Colonic mucosa (tissue), 4 donors: ENCODE measurements at regions of chr18 and their contacts with region 1.

Region 1: DNA sequence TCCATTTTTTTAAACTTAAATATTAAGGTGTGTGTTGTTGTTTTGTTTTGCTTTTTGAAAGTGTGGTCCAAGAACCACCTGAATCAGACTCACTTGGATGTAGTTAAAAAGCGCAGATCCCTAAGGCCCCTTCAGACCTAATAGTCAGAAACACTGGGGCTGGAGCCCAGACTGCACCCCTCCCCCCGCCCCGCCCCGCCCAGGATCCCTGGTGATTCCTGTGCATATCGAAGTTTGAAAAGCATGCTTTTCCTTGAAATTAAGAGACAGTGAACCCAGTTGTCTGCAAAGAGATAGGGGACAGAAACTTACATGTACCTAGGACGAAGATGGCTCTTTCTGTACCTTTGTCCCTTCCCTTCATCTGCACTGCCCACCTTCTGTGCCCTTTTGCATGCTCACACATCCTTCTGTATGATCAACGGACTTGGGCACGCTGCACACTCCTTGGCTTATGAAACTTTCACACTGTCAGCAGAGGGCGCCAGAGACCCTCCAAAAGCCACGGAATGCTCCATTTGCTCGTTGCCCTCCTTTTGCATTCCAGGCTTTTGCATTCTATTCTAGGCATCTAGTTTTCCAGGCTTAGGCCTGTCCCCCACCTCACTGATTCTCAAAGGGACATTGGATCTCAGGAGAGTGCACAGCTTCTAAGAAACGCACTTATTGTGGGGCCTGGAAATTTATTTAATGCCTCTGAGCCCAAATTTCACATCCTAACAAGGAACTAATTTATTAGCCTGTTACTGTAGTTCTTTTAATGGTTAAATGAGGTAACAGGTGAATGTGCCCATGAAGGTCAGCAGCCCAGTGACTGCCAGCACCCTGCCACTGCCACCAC is 32.8 kb upstream of the SLC14A1 start:
- DNase-seq: peak; percentile 75
- H3K4me3 ChIP-seq: no peak overlapping the region
- H3K27ac ChIP-seq: no peak overlapping the region
- H3K4me1 ChIP-seq: no peaks in the 10 kb centered on the region
- H3K27me3 ChIP-seq: no peaks in the 10 kb centered on the region
- CTCF ChIP-seq: peak; percentile 70

Region 2: GRCh38 chr18:45423659-45424058 is 267.5 kb before region 1 on chr18:
- intact Hi-C with region 1: no loop called
- DNase-seq: no peak
- H3K4me3 ChIP-seq: no peak overlapping the region
- H3K27ac ChIP-seq: no peak overlapping the region
- H3K4me1 ChIP-seq: no peaks in the 10 kb centered on the region
- H3K27me3 ChIP-seq: no peaks in the 10 kb centered on the region
- CTCF ChIP-seq: no peak

Region 3: DNA sequence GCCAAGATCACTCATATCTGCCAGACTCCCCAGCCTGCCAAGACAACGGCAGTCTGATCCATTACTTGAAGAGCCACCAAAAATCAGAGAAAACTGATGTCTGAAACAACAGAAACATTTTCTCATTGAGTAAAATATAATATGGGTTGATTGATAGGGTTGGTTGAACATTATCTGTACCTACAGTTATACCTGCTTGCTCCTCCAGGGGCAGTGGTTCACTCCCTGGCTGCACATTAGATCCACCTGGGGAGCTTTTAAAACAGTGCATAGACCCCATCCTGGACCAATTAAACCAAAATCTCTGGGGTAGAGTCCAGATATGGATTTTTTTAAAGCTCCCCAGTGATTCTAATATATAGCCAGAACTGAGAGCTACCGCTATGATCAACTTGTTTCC is 119.5 kb before region 1 on chr18:
- intact Hi-C with region 1: no loop called
- DNase-seq: no peak
- H3K4me3 ChIP-seq: no peak overlapping the region
- H3K27ac ChIP-seq: no peak overlapping the region
- H3K4me1 ChIP-seq: no peaks in the 10 kb centered on the region
- H3K27me3 ChIP-seq: no peaks in the 10 kb centered on the region
- CTCF ChIP-seq: no peak

Region 4: GRCh38 chr18:45879681-45880655 is 188.8 kb after region 1 on chr18:
- intact Hi-C with region 1: loop called (anchors 5 kb)
- DNase-seq: peak; percentile 51
- H3K4me3 ChIP-seq: no peak overlapping the region
- H3K27ac ChIP-seq: no peak overlapping the region
- H3K4me1 ChIP-seq: no peaks in the 10 kb centered on the region
- H3K27me3 ChIP-seq: no peaks in the 10 kb centered on the region
- CTCF ChIP-seq: peak; percentile 99

Region 5: DNA sequence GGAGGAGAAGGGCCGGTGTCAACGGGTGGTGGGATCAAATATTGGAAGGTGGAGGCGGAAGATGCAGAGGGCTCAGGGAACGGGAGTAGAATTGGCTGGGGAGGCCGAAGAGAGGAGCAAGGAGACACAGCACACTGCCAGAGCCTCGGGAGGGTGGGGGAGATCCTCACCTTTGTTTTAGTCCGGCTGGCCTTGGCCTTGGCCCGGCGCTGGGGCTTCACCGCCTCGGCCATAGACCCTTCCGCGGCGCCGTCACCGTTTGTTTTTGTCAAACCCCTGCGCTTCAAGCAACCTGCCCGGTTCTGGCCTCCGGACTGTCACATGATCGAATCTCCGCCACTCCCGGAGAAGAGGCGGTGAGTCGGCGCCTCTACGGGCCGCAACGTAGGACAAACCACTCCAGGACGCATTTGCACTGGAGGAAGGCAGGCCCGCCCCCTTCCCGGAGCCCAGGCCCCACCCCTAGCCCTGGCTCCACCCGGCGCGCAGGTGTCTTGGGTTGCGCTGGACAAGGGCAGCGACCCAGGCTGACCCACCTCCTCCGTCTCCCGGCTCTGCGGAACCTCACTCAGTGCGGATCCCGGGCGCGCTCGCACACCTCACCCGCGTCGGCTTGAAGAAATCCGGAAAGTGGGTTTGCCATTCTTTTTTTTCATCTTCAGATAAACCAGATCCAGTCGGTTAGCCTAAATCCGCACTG is 276.0 kb after region 1 on chr18 and contains the start of gene EPG5:
- intact Hi-C with region 1: loop called (anchors 5 kb)
- DNase-seq: peak; percentile 98
- H3K4me3 ChIP-seq: peak within 1 kb of the TSS; percentile 71
- H3K27ac ChIP-seq: peak within 1 kb of the TSS; percentile 43
- H3K4me1 ChIP-seq: no peaks in the 10 kb centered on the region
- H3K27me3 ChIP-seq: no peaks in the 10 kb centered on the region
- CTCF ChIP-seq: no peak
- total RNA-seq, gene EPG5: 16.0 to 17.3 TPM

Region 6: DNA sequence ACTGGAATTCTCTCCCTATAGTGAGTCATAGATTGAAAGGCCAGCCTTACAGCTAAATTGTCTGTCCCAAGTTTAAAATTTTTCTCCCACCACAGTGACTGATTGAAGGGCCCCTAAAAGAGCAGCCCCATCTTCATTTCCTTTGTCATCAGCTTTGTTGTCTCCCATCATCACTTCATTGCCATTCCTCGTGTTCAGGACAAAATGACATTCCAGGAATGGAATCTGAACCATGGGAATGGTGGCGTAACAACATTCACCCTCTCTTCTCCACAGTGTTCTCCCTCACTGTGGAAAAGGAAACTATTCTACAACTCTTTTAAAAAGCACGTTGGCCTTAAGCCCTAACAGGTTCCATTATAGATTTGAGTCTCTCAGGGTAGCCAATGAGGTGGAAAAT is 328.7 kb after region 1 on chr18:
- intact Hi-C with region 1: no loop called
- DNase-seq: no peak
- H3K4me3 ChIP-seq: no peak overlapping the region
- H3K27ac ChIP-seq: no peak overlapping the region
- H3K4me1 ChIP-seq: no peaks in the 10 kb centered on the region
- H3K27me3 ChIP-seq: no peaks in the 10 kb centered on the region
- CTCF ChIP-seq: no peak

Region 7: GRCh38 chr18:46067431-46068007 is 376.3 kb after region 1 on chr18:
- intact Hi-C with region 1: loop called (anchors 10 kb)
- DNase-seq: no peak
- H3K4me3 ChIP-seq: no peak overlapping the region
- H3K27ac ChIP-seq: no peak overlapping the region
- H3K4me1 ChIP-seq: peaks cover 4% of the 10 kb centered on the region
- H3K27me3 ChIP-seq: no peaks in the 10 kb centered on the region
- CTCF ChIP-seq: no peak

Region 8: DNA sequence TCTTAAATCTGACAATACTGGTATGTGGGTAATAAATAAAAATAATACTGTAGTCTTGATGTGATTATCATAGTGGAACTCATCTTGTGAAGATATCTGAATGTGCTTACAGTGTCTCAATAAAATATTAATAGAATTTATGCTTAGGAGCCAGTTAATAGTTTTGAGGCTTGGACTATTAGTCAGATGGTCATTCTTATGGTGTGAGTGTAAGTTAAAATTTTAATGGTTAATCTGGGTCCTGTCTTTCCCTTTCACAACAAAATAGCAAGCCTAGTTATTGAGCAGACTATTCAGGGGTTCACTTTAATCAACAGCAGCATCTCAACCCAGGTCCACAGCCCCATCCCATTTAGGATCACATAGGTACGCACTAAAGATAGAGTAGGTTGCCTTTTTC is 551.9 kb after region 1 on chr18:
- intact Hi-C with region 1: loop called (anchors 10 kb)
- DNase-seq: no peak
- H3K4me3 ChIP-seq: no peak overlapping the region
- H3K27ac ChIP-seq: no peak overlapping the region
- H3K4me1 ChIP-seq: no peaks in the 10 kb centered on the region
- H3K27me3 ChIP-seq: no peaks in the 10 kb centered on the region
- CTCF ChIP-seq: no peak